ENCODE measurements at regions of chr2 and their contacts with region 1.

Region 1: DNA sequence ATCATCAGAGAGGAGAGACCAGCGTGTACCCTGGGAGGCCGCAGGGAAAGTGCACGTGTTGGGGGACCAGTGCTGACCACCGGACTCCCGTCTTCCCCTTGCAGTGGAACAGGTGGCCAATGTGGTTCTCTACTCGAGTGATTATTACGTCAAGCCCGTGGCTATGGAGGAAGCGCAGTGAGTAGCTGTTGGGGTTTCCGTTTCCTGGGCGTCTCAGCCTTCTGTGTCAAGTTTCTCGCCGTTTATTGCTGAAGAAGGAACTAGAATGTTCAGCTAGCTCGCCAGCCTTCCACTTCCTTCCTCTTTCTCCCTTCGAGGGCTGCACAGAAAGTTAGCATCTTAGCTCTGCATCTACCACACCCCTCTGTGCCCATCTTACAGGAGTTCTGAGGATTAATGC is 22.8 kb upstream of the DGKD start:
- DNase-seq: peak; percentile 87
- H3K4me3 Mint-ChIP-seq: peak overlapping the region; percentile 36
- H3K27ac Mint-ChIP-seq: peak overlapping the region; percentile 98
- H3K4me1 Mint-ChIP-seq: peaks cover 58% of the 10 kb centered on the region
- H3K27me3 Mint-ChIP-seq: peaks cover 19% of the 10 kb centered on the region

Region 2: GRCh38 chr2:233092432-233093165 is 238.9 kb before region 1 on chr2:
- CTCF ChIA-PET with region 1: no interaction called
- DNase-seq: no peak
- H3K4me3 Mint-ChIP-seq: no peak overlapping the region
- H3K27ac Mint-ChIP-seq: peak overlapping the region; percentile 35
- H3K4me1 Mint-ChIP-seq: peaks cover 35% of the 10 kb centered on the region
- H3K27me3 Mint-ChIP-seq: no peaks in the 10 kb centered on the region

Region 3: GRCh38 chr2:233353769-233354499 is 22.4 kb after region 1 on chr2 and contains the start of gene DGKD:
- CTCF ChIA-PET with region 1: interaction called, 11 read pairs
- DNase-seq: peak; percentile 77
- H3K4me3 Mint-ChIP-seq: peak within 1 kb of the TSS; percentile 81
- H3K27ac Mint-ChIP-seq: peak within 1 kb of the TSS; percentile 83
- H3K4me1 Mint-ChIP-seq: peaks cover 78% of the 10 kb centered on the region
- H3K27me3 Mint-ChIP-seq: peaks cover 22% of the 10 kb centered on the region